HepG2 (cell line): ENCODE measurements at regions of chr10 and their contacts with region 1.

Region 1: GRCh38 chr10:7707102-7707501 is 4.0 kb downstream of the ITIH2 start:
- DNase-seq: peak; percentile 97
- ATAC-seq: peak; percentile 68
- H3K4me3 ChIP-seq: peak overlapping the region in 2 of 3 experiments; percentile 18 to 55; a peak in 2 of 6 replicates
- H3K27ac ChIP-seq: peak overlapping the region; percentile 98
- H3K4me1 ChIP-seq: peaks cover 78% of the 10 kb centered on the region
- H3K27me3 ChIP-seq: no peaks in the 10 kb centered on the region
- CTCF ChIP-seq: no peak
- EP300 ChIP-seq: peak; percentile 74 to 99; a peak in 3 of 4 replicates
- POLR2A ChIP-seq: peak; percentile 52 to 69
- RAD21 ChIP-seq: no peak

Region 2: DNA sequence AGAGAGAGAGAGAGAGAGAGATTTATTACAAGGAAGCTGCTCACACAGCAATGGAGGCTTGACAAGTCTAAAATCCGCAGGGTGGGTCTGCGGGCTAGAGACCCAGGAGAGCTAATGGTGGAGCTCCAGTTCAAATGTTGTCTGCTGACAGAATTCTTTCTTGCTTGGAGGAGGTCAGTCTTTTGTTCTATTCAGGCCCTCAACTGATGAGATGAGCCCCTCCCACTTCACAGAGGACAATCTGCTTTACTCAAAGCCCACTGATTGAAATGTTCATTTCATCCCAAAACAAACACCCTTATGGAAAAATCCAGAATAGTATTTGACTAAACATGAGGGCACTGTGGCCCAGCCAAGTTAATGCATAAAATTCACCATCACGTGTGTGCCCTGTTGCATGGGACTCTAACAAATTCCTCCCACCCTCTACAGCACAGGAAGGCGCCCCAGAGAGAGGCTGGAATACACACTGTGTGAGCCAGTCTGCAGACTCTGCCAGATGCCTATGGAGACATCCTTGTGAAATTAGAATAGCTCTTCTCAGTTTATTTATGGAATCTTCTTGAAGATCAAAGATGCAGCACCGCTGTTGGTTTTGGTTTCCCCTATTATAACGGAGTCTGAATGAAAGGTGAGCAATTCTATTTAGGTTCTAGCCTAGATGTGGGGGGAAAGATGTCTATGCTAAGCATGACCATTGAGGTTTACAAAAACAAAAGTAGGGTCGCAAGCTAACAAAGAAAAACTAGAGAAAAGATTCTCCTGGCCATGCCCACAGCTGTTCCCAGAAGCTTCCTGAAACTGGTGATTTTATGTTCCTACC is 173.2 kb before region 1 on chr10:
- CTCF ChIA-PET with region 1: no interaction called
- POLR2A ChIA-PET with region 1: interaction called, 13 read pairs
- in situ Hi-C with region 1: no loop called
- intact Hi-C with region 1: no loop called
- DNase-seq: no peak
- ATAC-seq: no peak; the same call in 2 of the 3 replicates
- H3K4me3 ChIP-seq: peak overlapping the region in 1 of 3 experiments; percentile 60; a peak in 1 of 6 replicates
- H3K27ac ChIP-seq: peak overlapping the region; percentile 63
- H3K4me1 ChIP-seq: peaks cover 20% of the 10 kb centered on the region
- H3K27me3 ChIP-seq: no peaks in the 10 kb centered on the region
- CTCF ChIP-seq: no peak
- EP300 ChIP-seq: no peak
- POLR2A ChIP-seq: no peak
- RAD21 ChIP-seq: no peak

Region 3: DNA sequence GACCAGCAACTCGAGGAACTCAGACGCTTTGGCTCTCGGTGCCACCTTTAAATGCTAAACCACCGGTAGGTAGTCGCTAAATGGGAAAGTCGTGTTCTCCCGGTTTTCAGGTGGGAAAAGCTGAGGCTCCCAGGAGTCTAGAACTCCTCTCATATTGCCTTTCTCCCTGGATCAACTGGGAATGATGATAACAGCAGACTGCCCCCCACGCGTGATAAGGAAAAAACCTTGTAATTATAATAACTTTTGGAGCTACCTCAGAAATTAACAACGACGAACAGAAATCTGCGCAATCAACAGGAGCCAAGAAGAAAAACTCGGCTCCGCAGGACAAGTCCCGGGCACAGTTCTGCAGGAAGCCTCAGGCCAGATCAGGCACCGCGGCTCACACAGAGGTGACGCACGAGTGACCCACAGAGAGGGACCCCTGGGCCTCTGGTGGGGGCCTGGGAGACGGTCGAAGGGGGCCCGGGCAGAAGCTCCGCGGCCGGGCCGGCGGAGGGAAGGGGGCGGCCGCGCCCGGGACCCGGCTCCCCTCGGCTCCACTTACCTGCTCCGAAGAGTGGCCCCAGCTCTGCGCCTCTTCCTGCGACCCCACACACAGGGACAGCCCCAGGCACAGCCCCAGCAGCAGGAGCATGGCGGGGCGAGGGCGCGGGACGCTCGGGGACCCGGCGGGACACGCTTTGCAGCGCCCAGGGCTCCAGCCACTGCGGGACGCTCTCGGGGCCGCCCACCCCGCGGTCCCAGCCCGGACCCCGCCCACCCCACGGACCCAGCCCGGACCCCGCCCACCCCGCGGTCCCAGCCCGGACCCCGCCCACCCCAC is 40.6 kb before region 1 on chr10 and contains the start of gene ITIH5:
- CTCF ChIA-PET with region 1: no interaction called
- POLR2A ChIA-PET with region 1: interaction called, 11 read pairs
- in situ Hi-C with region 1: no loop called
- intact Hi-C with region 1: no loop called
- DNase-seq: no peak
- ATAC-seq: peak; percentile 73
- H3K4me3 ChIP-seq: peak within 1 kb of the TSS; percentile 78 to 80 (median 78)
- H3K27ac ChIP-seq: no peak within 1 kb of the TSS
- H3K4me1 ChIP-seq: peaks cover 21% of the 10 kb centered on the region
- H3K27me3 ChIP-seq: peaks cover 0 to 23% of the 10 kb centered on the region in 2 experiments; a peak in 2 of 5 replicates
- CTCF ChIP-seq: no peak
- EP300 ChIP-seq: no peak
- POLR2A ChIP-seq: no peak
- RAD21 ChIP-seq: no peak
- total RNA-seq, gene ITIH5: 3.5 and 8.9 TPM in 2 replicates

Region 4: DNA sequence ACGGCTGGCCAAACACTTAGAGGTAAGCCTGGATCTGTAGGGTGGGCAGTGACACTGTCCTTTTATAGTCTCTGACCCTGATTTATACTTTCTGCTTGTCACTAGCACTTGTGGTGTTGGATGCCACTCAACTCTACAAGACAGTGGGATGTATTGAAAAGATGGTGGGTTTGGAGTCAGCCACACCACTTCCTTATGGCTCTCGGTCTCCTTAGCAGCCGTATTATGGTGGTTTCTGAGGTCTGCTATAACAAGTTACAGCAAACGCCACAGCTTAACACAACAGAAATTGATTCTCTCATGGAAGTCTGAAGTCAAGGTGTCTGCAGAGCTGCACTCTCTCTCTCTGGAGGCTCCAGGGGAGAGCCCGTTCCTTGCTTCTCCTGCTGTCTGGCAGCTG is 10.7 kb after region 1 on chr10:
- CTCF ChIA-PET with region 1: no interaction called
- POLR2A ChIA-PET with region 1: interaction called, 69 read pairs
- in situ Hi-C with region 1: no loop called
- intact Hi-C with region 1: no loop called
- DNase-seq: no peak
- ATAC-seq: no peak
- H3K4me3 ChIP-seq: no peak overlapping the region
- H3K27ac ChIP-seq: no peak overlapping the region
- H3K4me1 ChIP-seq: 0 out of 2 replicates have a peak, but pooled peaks cover 19% of the 10 kb centered on the region
- H3K27me3 ChIP-seq: no peaks in the 10 kb centered on the region
- CTCF ChIP-seq: no peak
- EP300 ChIP-seq: no peak
- POLR2A ChIP-seq: no peak; a peak in 1 of 4 replicates
- RAD21 ChIP-seq: no peak

Region 5: DNA sequence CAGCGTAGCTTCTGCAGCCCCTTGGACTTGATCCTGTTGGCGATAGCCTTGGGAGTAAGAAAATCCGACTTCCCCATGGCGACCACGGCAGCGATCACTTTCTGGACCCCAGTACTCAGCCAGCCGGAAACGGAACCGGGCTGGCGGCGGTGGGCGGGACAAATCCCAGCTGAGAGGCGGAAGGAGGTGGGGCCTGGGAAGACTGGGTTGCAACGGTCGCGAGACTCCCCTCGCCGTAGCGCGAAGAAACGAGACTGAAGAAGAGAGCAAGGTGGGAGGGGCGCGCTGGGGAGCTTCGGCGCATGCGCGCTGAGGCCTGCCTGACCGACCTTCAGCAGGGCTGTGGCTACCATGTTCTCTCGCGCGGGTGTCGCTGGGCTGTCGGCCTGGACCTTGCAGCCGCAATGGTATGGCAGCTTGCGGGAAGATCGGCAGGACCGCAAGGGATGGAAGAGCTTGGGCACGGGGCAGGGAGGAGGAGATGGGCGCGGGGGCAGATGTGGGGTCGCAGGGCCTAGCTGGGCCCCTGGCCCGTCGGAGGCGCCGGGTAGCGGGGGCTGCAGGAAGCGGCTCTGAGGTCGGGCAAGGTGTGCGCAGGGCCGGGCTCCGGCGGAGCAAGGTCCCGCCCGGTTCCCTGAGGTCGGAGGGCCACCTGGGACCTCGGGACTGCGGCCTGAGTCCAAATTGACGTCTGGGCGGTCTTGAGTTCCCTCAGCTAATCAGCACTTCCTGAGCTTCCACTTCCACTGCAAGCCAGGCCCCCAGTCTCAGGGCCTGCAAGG is 80.9 kb after region 1 on chr10 and contains the starts of genes ATP5F1C and KIN:
- CTCF ChIA-PET with region 1: no interaction called
- POLR2A ChIA-PET with region 1: interaction called, 24 read pairs
- in situ Hi-C with region 1: no loop called
- intact Hi-C with region 1: loop called (anchors 10 kb)
- DNase-seq: peak; percentile 94
- ATAC-seq: peak; percentile 96
- H3K4me3 ChIP-seq: peak within 1 kb of the TSS; percentile 72 to 99 (median 96)
- H3K27ac ChIP-seq: peak within 1 kb of the TSS; percentile 87
- H3K4me1 ChIP-seq: peaks cover 62% of the 10 kb centered on the region
- H3K27me3 ChIP-seq: no peaks in the 10 kb centered on the region; a peak in 1 of 5 replicates
- CTCF ChIP-seq: no peak
- EP300 ChIP-seq: no peak
- POLR2A ChIP-seq: peak; percentile 90 to 96
- RAD21 ChIP-seq: peak; percentile 45
- total RNA-seq, gene ATP5F1C: 416 and 578 TPM in 2 replicates
- total RNA-seq, gene KIN: 23.2 and 34.6 TPM in 2 replicates

Region 6: DNA sequence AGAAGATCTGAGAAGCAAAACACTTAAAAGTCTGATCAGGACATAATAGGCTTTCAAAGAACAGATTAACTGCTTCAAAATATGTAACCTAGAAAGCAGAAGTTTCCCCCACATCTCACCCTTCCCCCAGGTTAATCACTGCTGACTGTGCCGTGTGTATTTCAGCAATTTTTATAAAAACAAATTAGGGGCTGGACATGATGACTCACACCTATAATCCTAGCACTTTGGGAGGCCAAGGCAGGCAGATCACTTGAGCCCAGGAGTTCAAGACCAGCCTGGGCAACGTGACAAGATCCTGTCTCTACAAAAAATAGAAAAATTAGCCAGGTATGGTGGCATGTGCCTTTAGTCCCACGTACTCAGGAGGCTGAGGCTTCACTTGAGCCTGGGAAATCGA is 279.7 kb after region 1 on chr10:
- CTCF ChIA-PET with region 1: no interaction called
- POLR2A ChIA-PET with region 1: no interaction called
- in situ Hi-C with region 1: no loop called
- intact Hi-C with region 1: no loop called
- DNase-seq: no peak
- ATAC-seq: no peak
- H3K4me3 ChIP-seq: no peak overlapping the region
- H3K27ac ChIP-seq: no peak overlapping the region
- H3K4me1 ChIP-seq: no peaks in the 10 kb centered on the region
- H3K27me3 ChIP-seq: no peaks in the 10 kb centered on the region
- CTCF ChIP-seq: no peak
- EP300 ChIP-seq: no peak
- POLR2A ChIP-seq: no peak
- RAD21 ChIP-seq: no peak

Region 7: DNA sequence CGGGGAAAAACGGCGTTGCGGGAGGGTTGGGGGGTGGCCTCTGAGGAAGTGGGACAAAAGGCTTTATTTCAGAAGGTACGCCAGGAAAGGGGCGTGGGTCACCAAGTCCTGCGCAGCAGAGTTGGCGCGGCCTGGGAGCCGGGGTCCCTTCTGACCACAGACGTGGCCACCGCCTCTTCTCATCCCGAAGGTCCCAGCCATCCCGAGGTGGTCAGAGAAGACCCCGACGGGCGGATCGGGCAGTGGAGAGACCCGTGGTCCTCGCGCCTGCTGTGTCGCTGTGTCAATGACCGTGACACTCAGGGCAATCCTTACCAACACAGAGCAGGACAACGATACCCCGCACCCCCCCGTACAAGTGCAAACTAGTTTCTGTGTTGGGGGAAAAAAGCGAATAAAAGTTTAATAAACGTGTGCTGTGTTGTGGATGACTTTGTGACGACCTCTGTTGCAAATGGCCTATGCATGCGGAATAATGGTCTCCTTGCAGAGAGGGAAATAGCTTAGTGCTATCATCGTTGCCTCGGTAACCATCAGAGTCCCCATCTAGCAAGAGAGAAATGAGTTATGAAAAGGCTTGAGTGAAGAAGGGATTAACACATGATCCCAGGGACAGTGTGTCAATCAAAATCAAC is 328.0 kb after region 1 on chr10:
- CTCF ChIA-PET with region 1: no interaction called
- POLR2A ChIA-PET with region 1: no interaction called
- in situ Hi-C with region 1: no loop called
- intact Hi-C with region 1: no loop called
- DNase-seq: no peak
- ATAC-seq: no peak
- H3K4me3 ChIP-seq: no peak overlapping the region
- H3K27ac ChIP-seq: no peak overlapping the region
- H3K4me1 ChIP-seq: no peaks in the 10 kb centered on the region; the same call in 1 of the 2 replicates
- H3K27me3 ChIP-seq: peaks cover 17 to 74% of the 10 kb centered on the region in 2 experiments
- CTCF ChIP-seq: no peak
- EP300 ChIP-seq: no peak
- POLR2A ChIP-seq: no peak
- RAD21 ChIP-seq: no peak